ENCODE measurements at regions of chr11 and their contacts with region 1.

Region 1: GRCh38 chr11:62591448-62592145 is at the start of gene TUT1:
- DNase-seq: peak; percentile 96 to 98 (median 98)
- H3K4me3 ChIP-seq: peak within 1 kb of the TSS; percentile 69 to 87
- H3K4me3 Mint-ChIP-seq: peak within 1 kb of the TSS; percentile 89 to 98 (median 95)
- H3K27ac ChIP-seq: peak within 1 kb of the TSS; percentile 87
- H3K27ac Mint-ChIP-seq: peak within 1 kb of the TSS; percentile 87 to 98 (median 98)
- H3K4me1 ChIP-seq: peaks cover 43% of the 10 kb centered on the region
- H3K4me1 Mint-ChIP-seq: peaks cover 26 to 69% (median 44%) of the 10 kb centered on the region in 4 donors
- H3K27me3 ChIP-seq: no peaks in the 10 kb centered on the region
- H3K27me3 Mint-ChIP-seq: no peaks in the 10 kb centered on the region
- total RNA-seq, gene TUT1: 37.7 to 38.1 TPM

Region 2: GRCh38 chr11:62508268-62509058 is 83.1 kb before region 1 on chr11:
- CTCF ChIA-PET with region 1: no interaction called
- POLR2A ChIA-PET with region 1: no interaction called
- intact Hi-C with region 1: no loop called
- DNase-seq: no peak
- H3K4me3 ChIP-seq: no peak overlapping the region
- H3K4me3 Mint-ChIP-seq: no peak overlapping the region
- H3K27ac ChIP-seq: no peak overlapping the region
- H3K27ac Mint-ChIP-seq: peak overlapping the region in 3 of 7 donors; percentile 30 to 51 (median 36)
- H3K4me1 ChIP-seq: no peaks in the 10 kb centered on the region
- H3K4me1 Mint-ChIP-seq: peaks cover 0 to 4% (median 1%) of the 10 kb centered on the region in 4 donors
- H3K27me3 ChIP-seq: no peaks in the 10 kb centered on the region
- H3K27me3 Mint-ChIP-seq: no peaks in the 10 kb centered on the region

Region 3: DNA sequence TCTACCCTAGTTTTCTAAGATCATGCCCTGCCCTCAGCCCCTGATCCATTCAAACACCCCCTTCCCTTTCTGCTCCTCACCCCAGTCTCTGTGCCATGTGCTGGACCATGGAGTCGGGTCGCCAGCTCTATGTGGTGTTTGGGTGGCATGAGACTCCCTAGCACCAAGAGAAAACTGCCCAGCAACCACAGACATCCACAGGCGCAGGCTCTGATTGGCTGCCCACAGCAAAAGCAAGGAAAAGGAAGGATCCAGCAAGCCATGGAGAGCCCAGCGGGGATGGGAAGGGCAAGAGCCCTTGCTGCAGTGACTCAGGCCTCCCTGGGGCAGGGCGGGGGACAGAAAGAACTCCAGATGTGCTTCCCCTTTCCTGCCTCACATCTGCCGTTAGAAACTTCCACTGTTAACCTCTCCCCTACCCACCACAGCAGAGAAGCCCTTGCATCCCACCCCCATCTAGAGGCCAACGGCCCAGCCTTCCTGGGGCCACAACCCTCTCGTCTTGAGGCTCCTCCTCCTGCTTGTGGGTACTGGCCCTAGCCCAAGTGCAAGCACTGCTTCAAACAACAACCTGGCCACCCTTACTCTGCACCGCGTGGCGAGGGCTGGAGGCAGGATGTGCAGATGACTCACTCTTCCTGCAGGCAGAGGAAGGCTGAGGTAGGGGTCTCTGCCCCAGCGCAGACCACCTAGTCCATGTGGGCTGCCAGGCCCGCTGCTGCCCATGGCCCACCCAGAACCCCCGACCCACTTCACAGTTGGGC is 35.3 kb before region 1 on chr11:
- CTCF ChIA-PET with region 1: interaction called, 10 read pairs
- POLR2A ChIA-PET with region 1: interaction called, 109 read pairs
- intact Hi-C with region 1: loop called (anchors 1 kb)
- DNase-seq: peak; percentile 85 to 97 (median 87)
- H3K4me3 ChIP-seq: peak overlapping the region; percentile 37 to 75
- H3K4me3 Mint-ChIP-seq: peak overlapping the region; percentile 82 to 91 (median 90)
- H3K27ac ChIP-seq: peak overlapping the region; percentile 95
- H3K27ac Mint-ChIP-seq: peak overlapping the region; percentile 98 to 100 (median 100)
- H3K4me1 ChIP-seq: peaks cover 98% of the 10 kb centered on the region
- H3K4me1 Mint-ChIP-seq: peaks cover 73 to 97% (median 85%) of the 10 kb centered on the region in 4 donors
- H3K27me3 ChIP-seq: no peaks in the 10 kb centered on the region
- H3K27me3 Mint-ChIP-seq: peaks cover 0 to 2% of the 10 kb centered on the region in 2 donors

Region 4: GRCh38 chr11:62645956-62646824 is 54.6 kb after region 1 on chr11 and contains the start of gene GANAB:
- CTCF ChIA-PET with region 1: interaction called, 8 read pairs
- POLR2A ChIA-PET with region 1: interaction called, 36 read pairs
- intact Hi-C with region 1: loop called (anchors 2 kb)
- DNase-seq: peak; percentile 95 to 99 (median 97)
- H3K4me3 ChIP-seq: peak within 1 kb of the TSS; percentile 55 to 76
- H3K4me3 Mint-ChIP-seq: peak within 1 kb of the TSS; percentile 93 to 99 (median 95)
- H3K27ac ChIP-seq: peak within 1 kb of the TSS; percentile 92
- H3K27ac Mint-ChIP-seq: peak within 1 kb of the TSS; percentile 84 to 99 (median 97)
- H3K4me1 ChIP-seq: peaks cover 37% of the 10 kb centered on the region
- H3K4me1 Mint-ChIP-seq: peaks cover 14 to 48% (median 26%) of the 10 kb centered on the region in 4 donors
- H3K27me3 ChIP-seq: no peaks in the 10 kb centered on the region
- H3K27me3 Mint-ChIP-seq: no peaks in the 10 kb centered on the region
- total RNA-seq, gene GANAB: 260 to 262 TPM

Region 5: GRCh38 chr11:62694455-62695167 is 103.0 kb after region 1 on chr11:
- CTCF ChIA-PET with region 1: interaction called, 82 read pairs
- POLR2A ChIA-PET with region 1: interaction called, 20 read pairs
- intact Hi-C with region 1: loop called (anchors 1 kb)
- DNase-seq: peak; percentile 73 to 80 (median 74)
- H3K4me3 ChIP-seq: no peak overlapping the region
- H3K4me3 Mint-ChIP-seq: no peak overlapping the region
- H3K27ac ChIP-seq: no peak overlapping the region
- H3K27ac Mint-ChIP-seq: peak overlapping the region in 4 of 7 donors; percentile 7 to 77 (median 56)
- H3K4me1 ChIP-seq: no peaks in the 10 kb centered on the region
- H3K4me1 Mint-ChIP-seq: peaks cover 5 to 7% (median 6%) of the 10 kb centered on the region in 4 donors
- H3K27me3 ChIP-seq: no peaks in the 10 kb centered on the region
- H3K27me3 Mint-ChIP-seq: no peaks in the 10 kb centered on the region

Region 6: GRCh38 chr11:62771144-62772021 is 179.8 kb after region 1 on chr11 and contains the start of gene TAF6L:
- CTCF ChIA-PET with region 1: interaction called, 4 read pairs
- POLR2A ChIA-PET with region 1: interaction called, 27 read pairs
- intact Hi-C with region 1: no loop called
- DNase-seq: peak; percentile 86 to 92 (median 88)
- H3K4me3 ChIP-seq: peak within 1 kb of the TSS; percentile 67 to 83
- H3K4me3 Mint-ChIP-seq: peak within 1 kb of the TSS; percentile 87 to 97 (median 92)
- H3K27ac ChIP-seq: peak within 1 kb of the TSS; percentile 82
- H3K27ac Mint-ChIP-seq: peak within 1 kb of the TSS; percentile 92 to 99 (median 97)
- H3K4me1 ChIP-seq: peaks cover 24% of the 10 kb centered on the region
- H3K4me1 Mint-ChIP-seq: peaks cover 14 to 32% (median 22%) of the 10 kb centered on the region in 4 donors
- H3K27me3 ChIP-seq: no peaks in the 10 kb centered on the region
- H3K27me3 Mint-ChIP-seq: no peaks in the 10 kb centered on the region
- total RNA-seq, gene TAF6L: 26.3 to 34.0 TPM

Region 7: GRCh38 chr11:62855571-62856332 is 264.2 kb after region 1 on chr11:
- CTCF ChIA-PET with region 1: no interaction called
- POLR2A ChIA-PET with region 1: interaction called, 32 read pairs
- intact Hi-C with region 1: loop called (anchors 5 kb)
- DNase-seq: peak; percentile 98 to 99 (median 99)
- H3K4me3 ChIP-seq: peak overlapping the region; percentile 89 to 91
- H3K4me3 Mint-ChIP-seq: peak overlapping the region; percentile 95 to 99 (median 96)
- H3K27ac ChIP-seq: peak overlapping the region; percentile 78
- H3K27ac Mint-ChIP-seq: peak overlapping the region; percentile 93 to 98 (median 95)
- H3K4me1 ChIP-seq: peaks cover 57% of the 10 kb centered on the region
- H3K4me1 Mint-ChIP-seq: peaks cover 41 to 67% (median 55%) of the 10 kb centered on the region in 4 donors
- H3K27me3 ChIP-seq: no peaks in the 10 kb centered on the region
- H3K27me3 Mint-ChIP-seq: no peaks in the 10 kb centered on the region

Measured in CD4-positive, alpha-beta memory T cell (primary cell).